GM18951 (cell line): ENCODE measurements at regions of chr2 and their contacts with region 1.

Region 1: GRCh38 chr2:108583903-108584520 is 49.7 kb downstream of the LIMS1 start:
- POLR2A ChIP-seq: no peak

Region 2: GRCh38 chr2:107992069-107992468 is 591.9 kb before region 1 on chr2:
- in situ Hi-C with region 1: no loop called
- POLR2A ChIP-seq: no peak

Region 3: GRCh38 chr2:108324531-108325251 is 259.3 kb before region 1 on chr2:
- in situ Hi-C with region 1: loop called (anchors 25 kb)
- POLR2A ChIP-seq: no peak